Endothelial cell of umbilical vein (primary cell): ENCODE measurements at regions of chr10 and their contacts with region 1.

Region 1: DNA sequence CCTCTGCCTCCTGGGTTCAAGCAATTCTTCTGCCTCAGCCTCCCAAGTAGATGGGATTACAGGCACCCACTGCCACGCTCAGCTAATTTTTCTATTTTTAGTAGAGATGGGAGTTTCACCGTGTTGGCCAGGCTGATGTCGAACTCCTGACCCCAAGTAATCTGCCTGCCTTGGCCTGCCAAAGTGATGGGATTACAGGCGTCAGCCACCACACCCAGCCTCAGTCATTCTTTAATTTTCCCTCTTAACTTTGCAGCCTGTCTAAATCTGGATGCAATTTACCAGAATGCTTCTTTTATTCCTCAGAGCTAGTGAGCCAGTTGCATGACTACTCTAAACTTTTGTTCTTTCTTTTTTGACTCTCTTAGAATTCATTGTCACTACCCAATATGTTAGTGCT is 90.5 kb upstream of the CSTF2T start:
- DNase-seq: no peak
- H3K4me3 ChIP-seq: no peak overlapping the region
- H3K27ac ChIP-seq: no peak overlapping the region
- H3K4me1 ChIP-seq: no peaks in the 10 kb centered on the region
- H3K27me3 ChIP-seq: no peaks in the 10 kb centered on the region
- CTCF ChIP-seq: no peak
- POLR2A ChIP-seq: no peak

Region 2: DNA sequence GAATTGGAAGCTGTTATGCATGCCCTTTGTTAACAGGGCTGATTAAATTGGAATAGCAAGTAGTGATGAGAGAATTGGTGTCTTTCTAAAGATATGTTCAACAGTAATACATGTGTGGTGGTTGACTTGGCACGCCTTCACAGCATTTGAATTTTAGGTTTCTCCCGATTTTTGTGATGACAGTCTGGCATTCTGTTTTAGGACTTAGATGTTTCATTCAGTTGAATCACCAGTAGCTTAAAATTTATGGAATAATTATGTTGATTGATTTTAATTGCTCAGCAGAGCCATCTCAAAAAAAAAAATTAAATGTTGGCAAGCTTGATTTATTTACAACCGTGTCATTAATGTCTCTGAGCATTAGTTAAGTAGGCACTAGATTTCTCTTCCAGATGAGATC is 310.2 kb before region 1 on chr10:
- CTCF ChIA-PET with region 1: no interaction called
- POLR2A ChIA-PET with region 1: no interaction called
- dilution Hi-C with region 1: no loop called
- intact Hi-C with region 1: loop called (anchors 5 kb)
- DNase-seq: no peak
- H3K4me3 ChIP-seq: no peak overlapping the region
- H3K27ac ChIP-seq: no peak overlapping the region
- H3K4me1 ChIP-seq: peaks cover 2% of the 10 kb centered on the region
- H3K27me3 ChIP-seq: no peaks in the 10 kb centered on the region
- CTCF ChIP-seq: no peak
- POLR2A ChIP-seq: no peak

Region 3: GRCh38 chr10:51960494-51960895 is 170.6 kb after region 1 on chr10:
- CTCF ChIA-PET with region 1: no interaction called
- POLR2A ChIA-PET with region 1: no interaction called
- dilution Hi-C with region 1: no loop called
- intact Hi-C with region 1: no loop called
- DNase-seq: peak; percentile 52
- H3K4me3 ChIP-seq: no peak overlapping the region
- H3K27ac ChIP-seq: no peak overlapping the region
- H3K4me1 ChIP-seq: no peaks in the 10 kb centered on the region
- H3K27me3 ChIP-seq: no peaks in the 10 kb centered on the region
- CTCF ChIP-seq: peak; percentile 33 to 34
- POLR2A ChIP-seq: no peak